ENCODE measurements at regions of chr20 and their contacts with region 1.

Region 1: GRCh38 chr20:13119583-13119982 is 101.5 kb upstream of the ISM1 start:
- DNase-seq: peak; percentile 84
- ATAC-seq: peak; percentile 87
- H3K4me3 ChIP-seq: no peak overlapping the region
- H3K27ac ChIP-seq: no peak overlapping the region
- H3K4me1 ChIP-seq: peaks cover 35% of the 10 kb centered on the region
- H3K27me3 ChIP-seq: no peaks in the 10 kb centered on the region
- CTCF ChIP-seq: peak; percentile 98
- EP300 ChIP-seq: no peak
- POLR2A ChIP-seq: no peak
- RAD21 ChIP-seq: peak; percentile 94

Region 2: GRCh38 chr20:12327205-12327604 is 792.4 kb before region 1 on chr20:
- CTCF ChIA-PET with region 1: no interaction called
- POLR2A ChIA-PET with region 1: no interaction called
- in situ Hi-C with region 1: no loop called
- intact Hi-C with region 1: no loop called
- DNase-seq: no peak
- ATAC-seq: no peak
- H3K4me3 ChIP-seq: no peak overlapping the region
- H3K27ac ChIP-seq: no peak overlapping the region
- H3K4me1 ChIP-seq: no peaks in the 10 kb centered on the region
- H3K27me3 ChIP-seq: no peaks in the 10 kb centered on the region
- CTCF ChIP-seq: no peak
- EP300 ChIP-seq: no peak
- POLR2A ChIP-seq: no peak
- RAD21 ChIP-seq: no peak

Region 3: GRCh38 chr20:12925214-12925755 is 194.3 kb before region 1 on chr20:
- CTCF ChIA-PET with region 1: interaction called, 3 read pairs
- POLR2A ChIA-PET with region 1: no interaction called
- in situ Hi-C with region 1: no loop called
- intact Hi-C with region 1: loop called (anchors 1 kb)
- DNase-seq: peak; percentile 89
- ATAC-seq: peak; percentile 84
- H3K4me3 ChIP-seq: peak overlapping the region; percentile 56 to 79 (median 73)
- H3K27ac ChIP-seq: peak overlapping the region; percentile 6
- H3K4me1 ChIP-seq: peaks cover 68% of the 10 kb centered on the region
- H3K27me3 ChIP-seq: peaks cover 0 to 5% of the 10 kb centered on the region in 2 experiments; a peak in 1 of 5 replicates
- CTCF ChIP-seq: peak; percentile 99
- EP300 ChIP-seq: 0 out of 4 replicates have a peak, but pooled peaks of 1 of the 2 experiments have one; percentile 24
- POLR2A ChIP-seq: no peak
- RAD21 ChIP-seq: peak; percentile 99

Region 4: DNA sequence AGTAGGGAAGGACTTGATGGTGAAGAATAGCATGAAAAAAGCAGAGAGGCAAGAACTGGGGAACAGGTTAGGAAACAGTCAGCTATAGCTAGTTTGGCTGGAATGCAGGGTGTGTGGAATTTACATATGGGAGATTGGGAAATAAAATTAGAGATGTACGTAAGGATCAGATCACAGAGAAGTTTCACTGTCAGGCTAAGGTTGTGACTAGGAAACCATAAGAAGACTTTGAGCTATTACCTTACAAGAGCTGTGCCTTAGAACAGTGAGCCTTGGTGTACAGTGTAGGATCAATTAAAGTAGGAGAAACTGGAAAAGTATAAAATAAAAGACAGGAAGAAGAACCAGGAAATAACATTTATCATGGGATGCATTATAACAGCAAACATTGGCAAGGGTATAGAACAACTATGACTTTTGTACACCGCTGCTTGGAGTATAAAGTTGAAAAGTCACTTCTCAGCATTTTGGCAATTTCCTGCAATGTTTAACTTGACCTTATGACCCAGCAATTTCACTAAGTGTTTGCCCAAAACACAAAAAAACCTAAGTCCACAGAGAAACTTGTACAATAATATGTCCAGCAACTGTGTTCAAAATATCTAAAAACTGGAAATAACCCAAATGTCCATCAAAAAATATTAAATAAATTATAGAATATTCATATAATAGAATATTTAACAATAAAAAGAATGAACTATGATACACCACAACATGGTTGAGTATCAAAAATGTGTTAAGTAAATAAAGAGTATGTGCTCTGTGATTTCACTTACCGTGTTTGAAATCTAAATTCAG is 142.1 kb before region 1 on chr20:
- CTCF ChIA-PET with region 1: no interaction called
- POLR2A ChIA-PET with region 1: interaction called, 13 read pairs
- in situ Hi-C with region 1: no loop called
- intact Hi-C with region 1: no loop called
- DNase-seq: peak; percentile 92
- ATAC-seq: peak; percentile 80
- H3K4me3 ChIP-seq: peak overlapping the region; percentile 1 to 43 (median 40); a peak in 5 of 6 replicates
- H3K27ac ChIP-seq: peak overlapping the region; percentile 80
- H3K4me1 ChIP-seq: peaks cover 61% of the 10 kb centered on the region
- H3K27me3 ChIP-seq: no peaks in the 10 kb centered on the region
- CTCF ChIP-seq: no peak
- EP300 ChIP-seq: peak in 1 of 2 experiments; percentile 97; a peak in 2 of 4 replicates
- POLR2A ChIP-seq: 0 out of 4 replicates have a peak, but pooled peaks of 1 of the 2 experiments have one; percentile 22
- RAD21 ChIP-seq: no peak

Region 5: DNA sequence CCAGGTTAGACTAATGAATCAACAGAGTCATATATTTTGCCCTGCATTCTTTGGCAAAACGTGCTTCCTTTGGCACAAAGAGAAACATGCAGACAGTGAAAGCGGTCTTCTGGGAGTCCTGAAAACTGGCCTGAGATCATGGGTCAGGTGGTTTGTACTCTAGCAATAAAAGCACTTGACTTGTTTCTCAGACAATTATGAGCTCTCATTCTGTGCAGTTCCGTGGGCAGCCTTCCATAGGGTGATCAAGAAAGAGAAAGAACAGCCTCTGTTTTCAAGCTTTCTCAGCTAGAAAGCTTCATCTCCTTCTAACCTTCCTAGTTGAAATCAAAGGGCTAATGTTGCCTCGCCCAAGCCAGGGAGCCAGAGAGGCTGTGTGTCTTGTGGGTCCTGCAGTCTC is 38.8 kb after region 1 on chr20:
- CTCF ChIA-PET with region 1: no interaction called
- POLR2A ChIA-PET with region 1: no interaction called
- in situ Hi-C with region 1: no loop called
- intact Hi-C with region 1: no loop called
- DNase-seq: no peak
- ATAC-seq: no peak
- H3K4me3 ChIP-seq: no peak overlapping the region
- H3K27ac ChIP-seq: no peak overlapping the region
- H3K4me1 ChIP-seq: no peaks in the 10 kb centered on the region
- H3K27me3 ChIP-seq: no peaks in the 10 kb centered on the region
- CTCF ChIP-seq: no peak
- EP300 ChIP-seq: no peak
- POLR2A ChIP-seq: no peak
- RAD21 ChIP-seq: no peak

Region 6: GRCh38 chr20:13251106-13251903 is 131.7 kb after region 1 on chr20:
- CTCF ChIA-PET with region 1: no interaction called
- POLR2A ChIA-PET with region 1: no interaction called
- in situ Hi-C with region 1: loop called (anchors 5 kb)
- intact Hi-C with region 1: no loop called
- DNase-seq: peak; percentile 45
- ATAC-seq: peak; percentile 72
- H3K4me3 ChIP-seq: no peak overlapping the region; a peak in 1 of 6 replicates
- H3K27ac ChIP-seq: no peak overlapping the region
- H3K4me1 ChIP-seq: peaks cover 42% of the 10 kb centered on the region
- H3K27me3 ChIP-seq: no peaks in the 10 kb centered on the region
- CTCF ChIP-seq: no peak
- EP300 ChIP-seq: peak in 1 of 2 experiments; percentile 49; a peak in 1 of 4 replicates
- POLR2A ChIP-seq: no peak
- RAD21 ChIP-seq: no peak

Region 7: GRCh38 chr20:13302647-13303450 is 183.3 kb after region 1 on chr20:
- CTCF ChIA-PET with region 1: interaction called, 21 read pairs
- POLR2A ChIA-PET with region 1: no interaction called
- in situ Hi-C with region 1: no loop called
- intact Hi-C with region 1: loop called (anchors 1 kb)
- DNase-seq: peak; percentile 49
- ATAC-seq: peak; percentile 97
- H3K4me3 ChIP-seq: no peak overlapping the region
- H3K27ac ChIP-seq: no peak overlapping the region
- H3K4me1 ChIP-seq: peaks cover 22% of the 10 kb centered on the region
- H3K27me3 ChIP-seq: no peaks in the 10 kb centered on the region
- CTCF ChIP-seq: peak; percentile 82
- EP300 ChIP-seq: no peak
- POLR2A ChIP-seq: no peak
- RAD21 ChIP-seq: peak; percentile 79

Region 8: DNA sequence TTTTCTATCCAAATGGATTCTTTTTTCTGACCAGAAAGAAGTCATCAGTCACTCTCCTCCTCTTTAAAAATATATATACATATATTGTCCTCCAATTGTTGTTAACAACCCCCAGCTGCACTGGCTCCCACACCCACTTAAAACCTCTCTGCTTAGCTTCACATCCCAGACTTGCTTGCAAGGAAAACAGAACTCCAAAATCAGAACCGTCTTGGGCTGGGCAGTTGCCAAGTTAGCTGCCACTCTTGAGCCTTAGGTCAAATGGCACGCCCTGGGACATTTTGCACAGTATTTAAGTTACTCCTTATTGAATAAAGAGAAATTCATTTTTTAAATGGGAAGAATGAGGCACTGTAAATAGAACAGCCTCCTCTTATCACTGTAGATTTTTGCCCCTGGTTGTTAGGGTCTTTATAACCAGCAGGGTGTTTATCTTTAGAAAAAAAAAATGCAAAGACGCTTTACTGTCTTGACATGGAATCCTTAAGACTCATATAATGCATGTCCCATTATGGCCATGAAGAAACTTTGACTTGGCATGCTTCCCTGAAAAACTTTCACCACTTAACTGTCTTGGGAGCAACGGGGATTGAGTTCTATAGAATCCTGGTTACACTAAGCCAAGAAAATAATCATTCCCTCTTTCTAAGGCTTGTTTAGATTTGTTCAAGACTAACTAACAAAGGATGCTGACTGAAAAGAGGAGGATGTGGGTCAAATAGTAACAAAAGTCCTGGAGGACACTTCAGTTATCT is 306.0 kb after region 1 on chr20:
- CTCF ChIA-PET with region 1: no interaction called
- POLR2A ChIA-PET with region 1: no interaction called
- in situ Hi-C with region 1: no loop called
- intact Hi-C with region 1: loop called (anchors 10 kb)
- DNase-seq: no peak
- ATAC-seq: no peak
- H3K4me3 ChIP-seq: no peak overlapping the region
- H3K27ac ChIP-seq: peak overlapping the region; percentile 82
- H3K4me1 ChIP-seq: peaks cover 66% of the 10 kb centered on the region
- H3K27me3 ChIP-seq: no peaks in the 10 kb centered on the region
- CTCF ChIP-seq: no peak
- EP300 ChIP-seq: no peak
- POLR2A ChIP-seq: no peak
- RAD21 ChIP-seq: no peak

Region 9: DNA sequence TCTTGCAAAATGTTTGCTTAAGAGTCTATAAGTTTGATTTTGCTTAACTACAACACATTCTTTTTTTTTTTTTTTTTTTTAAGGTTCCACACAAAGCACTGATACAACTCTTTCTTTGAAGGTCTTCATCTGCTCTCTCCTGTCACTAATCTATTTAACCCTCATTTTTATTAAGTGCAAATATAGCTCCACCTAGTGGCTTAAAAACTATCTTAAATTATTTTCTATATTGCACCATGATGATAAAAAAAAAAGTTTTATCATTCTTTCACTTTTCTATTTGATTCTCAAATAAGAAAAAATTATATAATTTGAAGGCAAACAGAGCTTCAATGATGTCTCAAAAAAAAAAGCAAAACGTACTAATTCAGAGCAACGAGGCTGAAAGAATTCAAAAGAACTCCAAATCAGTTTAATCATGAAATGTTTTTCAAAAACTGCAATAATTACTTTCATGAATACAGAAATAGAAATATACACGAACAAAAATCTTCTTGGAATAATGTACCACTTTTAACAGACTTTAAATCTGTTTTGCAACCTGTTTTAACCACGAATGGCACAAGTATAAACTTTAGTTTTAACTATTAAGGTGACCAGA is 652.4 kb after region 1 on chr20:
- CTCF ChIA-PET with region 1: no interaction called
- POLR2A ChIA-PET with region 1: no interaction called
- in situ Hi-C with region 1: no loop called
- intact Hi-C with region 1: loop called (anchors 5 kb)
- DNase-seq: peak; percentile 28
- ATAC-seq: peak; percentile 46; the same call in 1 of the 3 replicates
- H3K4me3 ChIP-seq: no peak overlapping the region
- H3K27ac ChIP-seq: no peak overlapping the region
- H3K4me1 ChIP-seq: no peaks in the 10 kb centered on the region
- H3K27me3 ChIP-seq: no peaks in the 10 kb centered on the region
- CTCF ChIP-seq: peak; percentile 41
- EP300 ChIP-seq: no peak
- POLR2A ChIP-seq: no peak
- RAD21 ChIP-seq: no peak

Measured in HepG2 (cell line).